ENCODE measurements at regions of chr10 and their contacts with region 1.

Region 1: GRCh38 chr10:123994417-123995081 is 98.8 kb downstream of the CHST15 start:
- DNase-seq: peak; percentile 78
- H3K4me3 ChIP-seq: peak overlapping the region; percentile 41
- H3K27ac ChIP-seq: no peak overlapping the region
- H3K4me1 ChIP-seq: peaks cover 10% of the 10 kb centered on the region
- CTCF ChIP-seq: peak; percentile 97

Region 2: DNA sequence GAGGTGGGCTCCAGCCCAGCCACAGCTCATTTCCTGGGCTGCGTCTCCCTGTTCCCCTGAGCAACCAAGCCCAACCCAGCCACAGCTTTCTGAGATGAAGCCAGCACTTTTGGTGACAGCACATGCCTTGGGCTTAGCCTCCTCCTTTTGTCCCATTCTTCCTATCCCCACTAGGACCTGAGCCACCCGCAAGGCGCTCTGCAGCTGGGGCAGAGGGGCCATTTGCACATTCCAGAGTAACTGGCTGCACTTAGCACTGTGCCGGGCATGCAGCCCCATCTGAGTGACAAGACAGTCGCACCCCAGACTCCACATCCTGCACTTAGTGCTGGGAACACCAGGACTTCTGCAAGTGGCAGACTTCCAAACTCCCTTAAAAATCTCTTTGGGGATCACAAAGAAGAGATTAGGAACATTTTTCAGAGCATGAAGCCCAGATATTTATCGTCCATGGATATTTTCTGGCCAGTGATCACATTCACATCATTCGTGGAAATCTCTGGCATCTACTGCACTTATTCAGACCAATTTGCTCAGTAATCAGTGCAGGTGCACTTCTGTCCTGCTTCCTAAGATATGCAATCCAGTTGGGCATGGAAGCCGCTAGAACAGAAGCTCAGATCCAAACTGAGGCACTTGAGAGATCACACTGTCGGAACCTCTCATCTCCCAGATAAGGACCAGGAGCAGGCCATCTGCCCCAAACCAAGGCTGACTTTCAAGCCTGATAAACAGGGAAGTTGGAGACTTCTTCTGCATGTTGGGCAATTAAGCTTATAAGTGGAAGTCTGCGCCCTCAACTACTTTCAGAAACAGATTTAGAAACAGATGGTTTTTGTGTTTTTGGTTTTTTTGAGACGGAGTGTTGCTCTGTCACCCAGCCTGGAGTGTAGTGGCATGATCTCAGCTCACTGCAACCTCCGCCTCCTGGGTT is 72.5 kb after region 1 on chr10:
- CTCF ChIA-PET with region 1: no interaction called
- POLR2A ChIA-PET with region 1: no interaction called
- intact Hi-C with region 1: no loop called
- DNase-seq: peak; percentile 72
- H3K4me3 ChIP-seq: peak overlapping the region; percentile 57
- H3K27ac ChIP-seq: peak overlapping the region; percentile 85
- H3K4me1 ChIP-seq: peaks cover 97% of the 10 kb centered on the region
- CTCF ChIP-seq: no peak

Region 3: DNA sequence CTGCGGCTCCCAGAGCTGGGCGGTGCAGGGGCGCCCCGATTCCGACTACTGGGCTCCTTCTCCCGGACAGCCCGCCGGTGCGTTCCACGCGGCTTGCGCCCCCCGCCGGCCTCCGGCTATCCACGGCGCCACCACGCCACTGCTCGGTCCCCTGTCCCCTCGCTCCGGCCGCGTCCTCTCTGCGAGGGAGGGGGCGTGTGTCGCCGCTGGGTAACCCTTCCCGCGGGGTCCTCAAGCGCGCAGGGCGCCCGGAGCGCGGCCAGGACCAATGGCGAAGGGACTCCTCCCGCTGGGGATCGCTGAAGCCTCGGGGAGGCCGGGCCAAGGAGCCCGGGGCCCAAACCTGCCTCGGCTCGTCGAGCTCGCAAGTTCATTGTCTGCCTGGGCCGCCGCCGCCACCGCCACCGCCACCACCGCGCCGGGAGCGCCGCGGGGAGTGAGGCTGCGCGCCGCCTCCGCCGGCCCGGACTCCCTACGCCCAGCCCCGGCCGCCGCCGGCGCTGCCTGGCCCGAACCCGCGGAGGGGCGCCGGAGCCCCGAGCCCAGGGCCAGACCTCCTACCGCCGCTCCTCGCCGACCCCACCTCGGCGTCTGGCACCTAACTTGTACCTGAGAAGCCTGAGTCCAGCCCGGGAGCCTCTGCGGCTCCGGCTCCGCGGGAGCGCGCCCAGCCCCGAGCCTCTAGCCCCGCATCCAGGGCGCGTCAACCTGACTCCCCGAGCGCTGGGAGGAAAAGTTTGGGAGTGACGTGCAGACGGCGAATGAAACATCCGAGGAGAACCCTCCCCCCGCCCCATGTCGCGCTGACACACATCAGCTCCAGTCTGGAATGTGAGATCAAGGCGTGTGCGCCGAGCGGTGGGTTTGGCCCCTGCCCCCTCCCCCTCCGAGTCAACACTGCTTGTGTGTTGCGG is 98.6 kb after region 1 on chr10 and contains the start of gene CHST15:
- CTCF ChIA-PET with region 1: no interaction called
- POLR2A ChIA-PET with region 1: no interaction called
- intact Hi-C with region 1: loop called (anchors 2 kb)
- DNase-seq: peak; percentile 69
- H3K4me3 ChIP-seq: peak within 1 kb of the TSS; percentile 81
- H3K27ac ChIP-seq: peak within 1 kb of the TSS; percentile 68
- H3K4me1 ChIP-seq: peaks cover 42% of the 10 kb centered on the region
- CTCF ChIP-seq: peak; percentile 63
- total RNA-seq, gene CHST15: 19.9 and 26.4 TPM in 2 replicates

Region 4: GRCh38 chr10:124125447-124126116 is 131.0 kb after region 1 on chr10:
- CTCF ChIA-PET with region 1: interaction called, 3 read pairs
- POLR2A ChIA-PET with region 1: interaction called, 3 read pairs
- intact Hi-C with region 1: loop called (anchors 1 kb)
- DNase-seq: peak; percentile 82
- H3K4me3 ChIP-seq: no peak overlapping the region
- H3K27ac ChIP-seq: no peak overlapping the region
- H3K4me1 ChIP-seq: peaks cover 46% of the 10 kb centered on the region
- CTCF ChIP-seq: peak; percentile 91

Region 5: DNA sequence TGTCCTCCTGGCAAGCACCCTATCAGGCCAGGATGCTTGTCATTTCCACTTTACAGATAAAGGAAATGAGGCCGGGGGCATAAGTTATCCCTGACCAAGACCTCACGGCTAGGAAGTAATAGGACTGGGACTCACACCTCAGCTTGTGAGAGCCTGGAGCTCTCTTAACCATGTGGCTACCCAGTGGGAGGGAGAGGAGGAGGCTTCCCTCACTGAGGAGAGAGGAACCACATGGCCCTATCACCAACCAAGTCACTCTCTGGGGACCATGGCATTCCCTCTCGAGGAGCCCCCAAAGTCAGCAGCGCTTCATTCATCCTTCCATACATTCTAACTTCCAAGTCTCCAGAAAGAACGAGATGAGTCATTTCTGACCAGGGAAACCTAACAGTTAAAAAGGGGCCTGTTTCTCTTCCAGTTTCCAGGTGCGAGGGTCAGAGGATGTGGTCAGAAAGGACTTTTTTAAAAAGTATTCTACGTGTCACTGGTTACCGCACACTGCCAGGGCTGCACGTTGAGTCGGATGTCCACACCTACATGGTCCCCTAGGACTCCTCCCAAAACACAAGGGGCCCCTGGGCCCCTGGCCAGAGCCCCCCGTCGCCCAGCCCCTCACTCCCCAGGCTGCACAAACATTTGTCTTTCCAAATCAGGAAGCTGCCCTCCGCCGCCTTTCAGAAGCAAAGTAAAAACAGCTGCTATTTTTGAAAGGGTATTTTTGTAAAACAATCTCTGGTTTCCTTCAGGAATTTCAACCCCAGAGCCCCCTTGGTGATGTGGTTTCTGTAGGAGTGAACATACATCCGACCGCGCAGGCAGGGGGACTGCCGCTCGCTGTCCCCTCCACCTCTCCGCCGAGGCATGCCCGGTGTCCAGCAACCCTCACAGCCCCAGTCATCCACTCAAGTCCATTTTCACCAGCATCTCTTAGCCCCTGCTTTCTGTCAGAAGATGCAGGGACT is 227.1 kb after region 1 on chr10:
- CTCF ChIA-PET with region 1: interaction called, 3 read pairs
- POLR2A ChIA-PET with region 1: no interaction called
- intact Hi-C with region 1: loop called (anchors 10 kb)
- DNase-seq: peak; percentile 74
- H3K4me3 ChIP-seq: peak overlapping the region; percentile 33
- H3K27ac ChIP-seq: no peak overlapping the region
- H3K4me1 ChIP-seq: peaks cover 25% of the 10 kb centered on the region
- CTCF ChIP-seq: no peak

Region 6: DNA sequence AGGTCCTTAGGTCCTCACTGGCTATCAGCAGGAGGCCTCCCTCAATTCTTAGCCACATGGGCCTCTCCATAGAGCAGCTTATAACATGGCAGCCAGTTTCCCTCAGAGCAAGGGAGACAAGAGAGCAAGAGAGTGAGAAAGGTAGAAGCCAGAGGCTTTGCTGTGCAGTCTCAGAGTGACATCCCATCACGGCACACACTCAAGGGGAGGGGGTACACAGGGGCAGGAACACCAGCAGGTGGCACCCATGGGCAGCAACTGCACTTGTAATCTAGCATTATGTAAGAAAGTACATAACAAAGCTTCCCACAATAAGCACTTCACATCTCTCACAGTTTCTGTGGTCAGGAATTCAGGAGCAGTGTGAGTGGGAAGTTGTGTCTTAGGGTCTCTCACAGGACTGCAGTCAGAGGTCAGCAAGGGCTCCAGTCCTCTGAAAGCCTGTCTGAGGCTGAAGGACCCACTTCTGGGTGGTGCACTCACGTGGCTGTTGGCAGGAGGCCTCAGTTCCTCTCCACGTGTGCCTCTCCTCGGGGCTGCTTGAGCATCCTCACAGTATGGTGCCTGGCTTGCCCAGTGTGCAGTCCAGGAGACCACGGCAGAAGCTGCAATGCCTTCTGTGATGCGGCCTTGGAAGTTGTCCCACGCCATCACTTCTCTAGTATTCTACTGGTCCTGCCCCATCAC is 264.7 kb after region 1 on chr10:
- CTCF ChIA-PET with region 1: interaction called, 3 read pairs
- POLR2A ChIA-PET with region 1: no interaction called
- intact Hi-C with region 1: loop called (anchors 1 kb)
- DNase-seq: peak; percentile 49
- H3K4me3 ChIP-seq: no peak overlapping the region
- H3K27ac ChIP-seq: no peak overlapping the region
- H3K4me1 ChIP-seq: no peaks in the 10 kb centered on the region
- CTCF ChIP-seq: peak; percentile 73

Region 7: GRCh38 chr10:124388823-124389612 is 394.5 kb after region 1 on chr10:
- CTCF ChIA-PET with region 1: interaction called, 17 read pairs
- POLR2A ChIA-PET with region 1: interaction called, 4 read pairs
- intact Hi-C with region 1: loop called (anchors 1 kb)
- DNase-seq: peak; percentile 90
- H3K4me3 ChIP-seq: peak overlapping the region; percentile 15
- H3K27ac ChIP-seq: no peak overlapping the region
- H3K4me1 ChIP-seq: peaks cover 5% of the 10 kb centered on the region
- CTCF ChIP-seq: peak; percentile 89

Region 8: DNA sequence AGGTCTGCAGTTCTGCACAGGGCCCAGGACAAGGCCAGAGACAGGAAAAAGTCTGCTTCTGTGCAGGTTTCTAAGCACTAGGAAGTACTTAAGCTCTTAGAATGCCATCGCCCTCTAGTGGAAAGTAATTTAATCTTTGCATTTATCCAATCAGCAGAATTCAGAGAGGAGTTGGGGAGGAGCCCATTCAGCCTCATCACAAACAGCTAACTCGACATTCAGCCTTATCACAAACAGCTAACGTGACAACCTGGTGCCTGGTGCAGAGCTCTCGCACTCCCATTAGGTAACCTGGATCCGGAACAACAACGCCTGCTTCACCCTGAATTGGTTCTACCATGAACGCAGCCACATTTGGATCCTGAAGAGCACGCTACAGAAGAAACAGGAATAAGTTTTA is 409.0 kb after region 1 on chr10:
- CTCF ChIA-PET with region 1: interaction called, 3 read pairs
- POLR2A ChIA-PET with region 1: no interaction called
- intact Hi-C with region 1: loop called (anchors 1 kb)
- DNase-seq: peak; percentile 94
- H3K4me3 ChIP-seq: no peak overlapping the region
- H3K27ac ChIP-seq: peak overlapping the region; percentile 44
- H3K4me1 ChIP-seq: peaks cover 12% of the 10 kb centered on the region
- CTCF ChIP-seq: peak; percentile 86

Measured in OCI-LY7 (cell line).